ENCODE measurements at regions of chr13 and their contacts with region 1.

Region 1: GRCh38 chr13:110937511-110938285 is 22.8 kb upstream of the ANKRD10 start:
- DNase-seq: no peak
- ATAC-seq: peak; percentile 30
- H3K4me3 ChIP-seq: no peak overlapping the region
- H3K27ac ChIP-seq: no peak overlapping the region
- H3K4me1 ChIP-seq: no peaks in the 10 kb centered on the region
- H3K27me3 ChIP-seq: no peaks in the 10 kb centered on the region
- CTCF ChIP-seq: no peak

Region 2: GRCh38 chr13:111031531-111031961 is 93.8 kb after region 1 on chr13:
- intact Hi-C with region 1: loop called in 1 of 2 experiments (anchors 10 kb)
- DNase-seq: no peak
- ATAC-seq: no peak
- H3K4me3 ChIP-seq: no peak overlapping the region
- H3K27ac ChIP-seq: no peak overlapping the region
- H3K4me1 ChIP-seq: no peaks in the 10 kb centered on the region
- H3K27me3 ChIP-seq: peaks cover 0 to 4% of the 10 kb centered on the region in 2 donors
- CTCF ChIP-seq: no peak